Activated T-helper 1 cell treated with anti-CD3 and anti-CD28 coated beads, Interleukin-12 subunit alpha, Interleukin-12 subunit beta, Interleukin-2, Interleukin-4 antibody, amounts not matched to agents 30 ng/mL and 10 ng/mL and 1 ng/mL, durations not matched to agents 14 hours and 24 hours and 36 hours (primary cell): ENCODE measurements at regions of chr17 and their contacts with region 1.

Region 1: GRCh38 chr17:7435221-7435675 is at the start of gene TMEM102:
- DNase-seq: peak; percentile 97
- H3K4me3 Mint-ChIP-seq: peak within 1 kb of the TSS; percentile 91
- H3K27ac Mint-ChIP-seq: peak within 1 kb of the TSS; percentile 94
- H3K4me1 Mint-ChIP-seq: peaks cover 38% of the 10 kb centered on the region
- H3K27me3 Mint-ChIP-seq: peaks cover 5% of the 10 kb centered on the region
- total RNA-seq, gene TMEM102: 12.3 and 14.0 TPM in 2 replicates

Region 2: GRCh38 chr17:7045909-7046724 is 389.1 kb before region 1 on chr17:
- intact Hi-C with region 1: loop called (anchors 5 kb)
- DNase-seq: no peak
- H3K4me3 Mint-ChIP-seq: peak overlapping the region; percentile 66
- H3K27ac Mint-ChIP-seq: peak overlapping the region; percentile 72
- H3K4me1 Mint-ChIP-seq: peaks cover 20% of the 10 kb centered on the region
- H3K27me3 Mint-ChIP-seq: peaks cover 8% of the 10 kb centered on the region

Region 3: DNA sequence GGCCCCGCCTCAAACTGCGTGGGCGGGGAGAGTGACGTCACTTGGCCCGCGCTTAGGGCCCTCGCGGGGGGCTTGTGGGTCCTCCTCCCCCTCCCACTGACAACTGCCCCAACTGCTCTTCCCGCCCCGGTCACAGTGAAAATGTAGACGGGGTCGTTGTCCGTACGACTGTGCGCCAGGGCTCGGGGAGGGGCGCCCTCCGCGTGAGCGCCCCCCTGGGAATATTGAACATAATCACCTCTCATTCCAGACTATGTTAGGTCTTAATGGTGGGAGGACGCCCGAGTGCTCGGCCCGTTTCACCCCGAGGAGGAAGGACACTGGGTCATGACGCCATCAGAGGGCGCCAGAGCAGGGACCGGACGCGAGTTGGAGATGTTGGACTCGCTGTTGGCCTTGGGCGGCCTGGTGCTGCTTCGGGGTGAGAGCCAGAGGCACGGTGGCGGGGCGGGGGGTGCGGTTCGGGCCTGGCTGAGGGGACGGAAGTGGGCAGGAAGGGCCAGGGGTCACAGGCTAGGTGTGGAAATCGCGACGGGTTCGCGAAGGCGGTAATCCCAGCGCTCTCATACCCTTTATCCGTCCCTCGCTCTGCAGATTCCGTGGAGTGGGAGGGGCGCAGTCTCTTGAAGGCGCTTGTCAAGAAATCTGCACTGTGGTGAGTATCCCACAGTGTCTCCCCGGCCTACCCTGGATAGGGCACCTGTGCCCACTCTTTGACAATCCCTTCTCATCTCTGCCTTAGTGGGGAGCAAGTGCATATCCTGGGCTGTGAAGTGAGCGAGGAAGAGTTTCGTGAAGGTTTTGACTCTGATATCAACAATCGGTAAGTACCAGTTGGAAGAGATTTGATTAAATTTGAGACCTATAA is 182.8 kb before region 1 on chr17 and contains the start of gene ELP5:
- intact Hi-C with region 1: loop called (anchors 1 kb)
- DNase-seq: peak; percentile 86
- H3K4me3 Mint-ChIP-seq: peak within 1 kb of the TSS; percentile 98
- H3K27ac Mint-ChIP-seq: peak within 1 kb of the TSS; percentile 99
- H3K4me1 Mint-ChIP-seq: peaks cover 42% of the 10 kb centered on the region
- H3K27me3 Mint-ChIP-seq: peaks cover 5% of the 10 kb centered on the region
- total RNA-seq, gene ELP5: 73.6 and 75.5 TPM in 2 replicates

Region 4: DNA sequence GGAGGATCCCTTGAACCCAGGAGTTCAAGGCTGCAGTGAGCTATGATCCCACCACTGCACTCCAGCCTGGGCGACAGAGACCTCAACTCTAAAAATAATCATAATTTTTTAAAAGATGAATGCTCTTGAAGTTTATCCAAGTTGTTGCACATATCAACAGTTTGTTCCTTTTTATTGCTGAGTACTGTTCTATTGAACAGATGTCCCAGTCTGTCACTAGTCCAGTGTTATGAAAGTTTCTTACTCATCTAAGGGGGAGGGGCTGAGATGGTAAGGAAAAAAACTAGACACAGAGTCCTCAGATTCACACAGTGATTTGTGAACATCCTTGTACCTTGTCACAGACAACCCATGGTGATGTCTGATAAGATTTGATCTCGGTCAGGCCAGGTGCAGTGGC is 95.1 kb before region 1 on chr17:
- intact Hi-C with region 1: no loop called
- DNase-seq: no peak
- H3K4me3 Mint-ChIP-seq: no peak overlapping the region
- H3K27ac Mint-ChIP-seq: no peak overlapping the region
- H3K4me1 Mint-ChIP-seq: peaks cover 42% of the 10 kb centered on the region
- H3K27me3 Mint-ChIP-seq: no peaks in the 10 kb centered on the region

Region 5: GRCh38 chr17:7351665-7352501 is 83.4 kb before region 1 on chr17 and contains the start of gene KCTD11:
- intact Hi-C with region 1: loop called (anchors 1 kb)
- DNase-seq: peak; percentile 76
- H3K4me3 Mint-ChIP-seq: peak within 1 kb of the TSS; percentile 84
- H3K27ac Mint-ChIP-seq: peak within 1 kb of the TSS; percentile 87
- H3K4me1 Mint-ChIP-seq: peaks cover 41% of the 10 kb centered on the region
- H3K27me3 Mint-ChIP-seq: no peaks in the 10 kb centered on the region
- total RNA-seq, gene KCTD11: 5.3 TPM in 2 replicates

Region 6: DNA sequence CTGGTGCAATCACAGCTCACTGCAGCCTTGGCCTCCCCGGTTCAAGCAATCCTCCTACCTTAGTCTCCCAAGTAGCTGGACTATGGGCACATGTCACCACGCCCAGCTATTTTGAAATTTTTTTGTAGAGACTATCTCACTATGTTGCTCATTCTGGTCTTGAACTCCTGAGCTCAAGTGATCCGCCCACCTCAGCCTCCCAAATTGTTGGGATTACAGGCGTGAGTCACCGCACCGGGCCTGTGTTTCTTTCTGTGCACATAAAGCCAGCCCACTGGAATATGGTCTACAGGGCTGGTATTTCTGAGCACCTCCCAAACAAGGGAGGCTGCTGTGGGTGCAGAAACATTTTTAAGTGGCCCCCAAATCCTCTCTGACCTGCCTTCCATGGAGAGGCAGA is 71.9 kb before region 1 on chr17:
- intact Hi-C with region 1: no loop called
- DNase-seq: no peak
- H3K4me3 Mint-ChIP-seq: no peak overlapping the region
- H3K27ac Mint-ChIP-seq: no peak overlapping the region
- H3K4me1 Mint-ChIP-seq: no peaks in the 10 kb centered on the region
- H3K27me3 Mint-ChIP-seq: peaks cover 3% of the 10 kb centered on the region

Region 7: GRCh38 chr17:7454980-7455379 is 19.7 kb after region 1 on chr17:
- intact Hi-C with region 1: loop called (anchors 1 kb)
- DNase-seq: no peak
- H3K4me3 Mint-ChIP-seq: peak overlapping the region; percentile 87
- H3K27ac Mint-ChIP-seq: peak overlapping the region; percentile 88
- H3K4me1 Mint-ChIP-seq: peaks cover 31% of the 10 kb centered on the region
- H3K27me3 Mint-ChIP-seq: no peaks in the 10 kb centered on the region

Region 8: DNA sequence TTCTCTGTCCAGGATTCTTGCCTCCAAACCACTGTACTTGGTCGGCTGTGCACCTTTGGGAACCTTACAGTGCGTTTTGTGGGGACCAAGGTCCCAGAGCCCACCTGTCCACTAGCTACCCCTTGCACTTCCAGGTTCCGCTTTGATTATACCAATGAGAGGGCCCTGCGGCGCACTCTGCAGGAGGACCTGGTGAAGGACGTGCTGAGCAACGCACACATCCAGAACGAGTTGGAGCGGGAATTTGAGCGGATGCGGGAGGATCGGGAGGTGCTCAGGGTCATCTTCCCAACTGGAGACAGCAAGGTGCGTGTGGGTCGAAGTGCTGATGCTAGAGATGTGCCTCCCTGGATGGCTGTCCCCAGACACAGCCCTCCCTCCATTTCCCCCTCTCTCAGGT is 67.7 kb after region 1 on chr17:
- intact Hi-C with region 1: loop called (anchors 5 kb)
- DNase-seq: no peak
- H3K4me3 Mint-ChIP-seq: no peak overlapping the region
- H3K27ac Mint-ChIP-seq: no peak overlapping the region
- H3K4me1 Mint-ChIP-seq: no peaks in the 10 kb centered on the region
- H3K27me3 Mint-ChIP-seq: no peaks in the 10 kb centered on the region

Region 9: DNA sequence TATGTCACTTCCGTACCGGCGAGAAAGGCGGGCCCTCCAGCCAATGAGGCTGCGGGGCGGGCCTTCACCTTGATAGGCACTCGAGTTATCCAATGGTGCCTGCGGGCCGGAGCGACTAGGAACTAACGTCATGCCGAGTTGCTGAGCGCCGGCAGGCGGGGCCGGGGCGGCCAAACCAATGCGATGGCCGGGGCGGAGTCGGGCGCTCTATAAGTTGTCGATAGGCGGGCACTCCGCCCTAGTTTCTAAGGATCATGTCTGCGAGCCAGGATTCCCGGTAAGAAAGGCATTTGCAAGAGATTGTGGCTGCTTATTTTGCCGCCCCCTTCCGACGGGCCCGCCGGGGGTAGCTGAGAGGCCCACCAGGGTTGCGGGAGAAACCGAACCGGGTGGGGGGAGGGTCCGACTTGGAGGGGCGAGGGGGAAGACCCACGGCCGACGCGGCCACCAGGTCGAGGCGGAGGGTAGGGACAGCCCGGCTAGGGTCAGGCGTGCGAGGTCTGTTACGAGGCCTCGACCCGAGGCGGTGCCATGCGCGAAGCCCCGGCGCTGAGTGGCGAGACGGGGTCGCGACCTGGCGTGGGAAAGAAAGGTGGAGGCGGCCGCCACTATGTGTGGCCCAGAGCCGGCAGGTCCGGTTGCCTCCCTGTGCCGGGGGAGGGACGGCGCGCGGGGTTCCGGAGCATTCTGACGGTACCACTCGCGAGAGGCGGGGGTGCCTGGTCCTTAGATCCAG is 137.5 kb after region 1 on chr17:
- intact Hi-C with region 1: loop called (anchors 1 kb)
- DNase-seq: peak; percentile 100
- H3K4me3 Mint-ChIP-seq: peak overlapping the region; percentile 94
- H3K27ac Mint-ChIP-seq: peak overlapping the region; percentile 100
- H3K4me1 Mint-ChIP-seq: peaks cover 54% of the 10 kb centered on the region
- H3K27me3 Mint-ChIP-seq: peaks cover 2% of the 10 kb centered on the region

Region 10: DNA sequence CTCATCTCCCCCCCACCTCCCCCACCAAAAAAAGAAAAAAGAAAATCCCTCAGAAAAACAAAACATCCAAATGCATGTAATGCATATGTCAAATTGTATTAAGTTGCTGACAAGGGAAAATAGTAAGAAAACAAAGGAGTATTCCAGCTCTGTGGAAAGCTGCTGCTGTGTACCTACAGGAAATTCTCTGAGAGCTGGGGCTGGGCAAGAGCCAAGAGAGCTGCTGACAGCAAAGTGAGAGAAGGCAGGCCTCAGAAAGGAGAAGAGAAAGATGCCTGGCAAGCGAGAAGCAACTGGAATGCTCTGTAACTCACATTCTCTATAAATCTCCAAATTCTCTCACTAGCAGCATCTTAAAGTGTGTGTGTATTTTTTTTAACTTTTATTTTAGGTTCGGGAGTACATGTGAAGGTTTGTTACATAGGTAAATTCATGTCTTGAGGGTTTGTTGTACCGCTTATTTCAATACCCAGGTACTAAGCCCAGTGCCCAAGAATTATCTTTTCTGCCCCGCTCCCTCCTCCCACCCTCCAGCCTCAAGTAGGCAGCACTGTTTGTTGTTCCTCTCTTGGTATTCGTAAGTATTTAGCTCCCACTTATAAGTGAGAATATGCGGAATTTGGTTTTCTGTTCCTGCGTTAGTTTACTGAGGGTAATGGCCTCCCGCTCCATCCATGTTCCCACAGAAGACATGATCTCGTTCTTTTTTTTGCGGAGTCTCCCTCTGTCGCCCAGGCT is 521.1 kb after region 1 on chr17:
- intact Hi-C with region 1: no loop called
- DNase-seq: no peak
- H3K4me3 Mint-ChIP-seq: no peak overlapping the region
- H3K27ac Mint-ChIP-seq: no peak overlapping the region
- H3K4me1 Mint-ChIP-seq: peaks cover 4% of the 10 kb centered on the region
- H3K27me3 Mint-ChIP-seq: no peaks in the 10 kb centered on the region